Calu3 (cell line): ENCODE measurements at regions of chr1 and their contacts with region 1.

Region 1: DNA sequence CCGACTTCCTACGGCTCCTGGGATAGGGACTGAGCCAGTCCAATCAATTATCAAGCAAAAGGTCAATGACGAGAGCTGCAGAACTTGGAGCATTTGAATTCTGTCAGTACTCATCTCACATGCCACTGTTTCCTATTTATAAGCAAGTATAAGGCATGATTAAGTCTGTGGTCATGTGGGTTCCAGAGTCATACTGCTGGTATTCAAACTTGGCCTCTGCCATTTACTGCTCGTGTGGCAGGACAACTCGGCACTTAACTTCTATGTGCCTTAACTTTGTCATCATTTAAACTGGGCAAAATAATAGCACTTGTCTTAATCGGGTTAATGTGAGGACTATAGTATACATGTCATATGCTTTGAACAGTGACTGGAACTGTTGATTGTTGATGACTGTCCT is 44.9 kb upstream of the TNFSF18 start:
- DNase-seq: no peak
- H3K4me3 Mint-ChIP-seq: no peak overlapping the region
- H3K27ac Mint-ChIP-seq: no peak overlapping the region
- H3K4me1 Mint-ChIP-seq: peaks cover 19% of the 10 kb centered on the region
- H3K27me3 Mint-ChIP-seq: no peaks in the 10 kb centered on the region
- CTCF ChIP-seq: no peak

Region 2: DNA sequence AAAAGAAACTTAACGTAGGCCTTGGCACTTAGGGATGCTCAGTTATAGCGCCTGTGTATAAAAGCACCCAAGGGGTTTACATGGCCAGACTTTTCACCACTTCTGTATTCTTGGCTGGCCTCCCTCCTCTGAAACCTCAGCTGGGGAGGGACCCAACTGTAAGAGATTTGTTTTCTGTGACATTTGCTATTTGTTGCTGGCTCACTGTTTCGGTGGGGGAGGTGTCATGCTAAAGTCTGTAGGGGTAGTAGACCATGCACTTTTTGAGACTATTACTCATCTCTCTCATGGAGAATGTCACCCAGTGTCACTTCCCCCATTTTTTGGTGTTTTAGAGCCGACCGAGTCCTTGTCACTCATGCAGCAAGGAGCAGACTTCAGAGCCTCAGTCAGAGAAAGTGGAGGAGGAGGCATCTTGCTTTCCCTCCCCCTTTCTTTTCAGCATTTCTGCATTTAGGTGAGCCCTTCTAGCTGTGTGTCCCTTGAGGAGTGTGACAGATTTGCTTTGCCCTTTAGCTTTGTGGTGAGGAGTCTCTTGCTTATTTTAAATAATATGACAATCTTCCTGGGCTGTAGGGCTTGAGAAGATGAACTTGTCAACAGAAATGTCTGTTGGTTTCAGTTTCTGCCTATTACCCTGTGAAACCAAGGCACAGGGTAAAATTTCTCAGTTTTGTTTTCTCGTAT is 276.6 kb before region 1 on chr1:
- CTCF ChIA-PET with region 1: no interaction called
- intact Hi-C with region 1: no loop called
- DNase-seq: no peak
- H3K4me3 Mint-ChIP-seq: no peak overlapping the region
- H3K27ac Mint-ChIP-seq: no peak overlapping the region
- H3K4me1 Mint-ChIP-seq: peaks cover 6% of the 10 kb centered on the region
- H3K27me3 Mint-ChIP-seq: no peaks in the 10 kb centered on the region
- CTCF ChIP-seq: no peak

Region 3: DNA sequence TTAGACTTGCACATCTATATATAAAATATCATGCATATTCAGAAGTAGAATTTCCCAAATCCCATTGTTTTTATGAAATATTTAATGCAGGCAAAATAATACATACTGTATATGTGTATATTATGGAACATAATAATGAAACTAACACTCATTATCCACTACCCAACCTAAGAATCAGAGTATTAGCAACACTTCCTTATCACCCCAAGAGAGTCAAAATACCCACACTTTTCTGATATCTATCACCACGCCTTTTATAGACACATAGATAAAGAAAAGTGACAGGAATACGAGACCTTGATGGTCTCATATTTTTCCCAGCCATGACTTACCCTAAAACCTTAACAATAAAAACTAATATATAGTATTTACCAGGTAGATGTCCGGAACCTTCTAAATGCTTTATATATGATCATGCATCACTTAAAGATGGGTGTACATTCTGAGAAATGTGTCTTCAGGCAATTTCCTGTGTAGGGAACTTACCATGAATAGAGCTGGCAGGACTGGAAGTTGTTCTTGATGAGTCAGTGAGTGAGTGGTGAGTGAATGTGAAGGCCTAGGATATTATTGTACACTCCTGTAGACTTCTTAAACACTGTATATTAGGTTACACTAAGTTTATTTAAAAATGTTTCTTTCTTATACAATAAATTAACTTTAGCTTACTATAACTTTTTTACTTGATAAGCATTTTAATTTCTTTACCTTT is 66.0 kb after region 1 on chr1:
- CTCF ChIA-PET with region 1: no interaction called
- intact Hi-C with region 1: loop called (anchors 2 kb)
- DNase-seq: no peak
- H3K4me3 Mint-ChIP-seq: no peak overlapping the region
- H3K27ac Mint-ChIP-seq: no peak overlapping the region
- H3K4me1 Mint-ChIP-seq: no peaks in the 10 kb centered on the region
- H3K27me3 Mint-ChIP-seq: no peaks in the 10 kb centered on the region
- CTCF ChIP-seq: no peak